GM12878 (cell line): ENCODE measurements at regions of chr7 and their contacts with region 1.

Region 1: DNA sequence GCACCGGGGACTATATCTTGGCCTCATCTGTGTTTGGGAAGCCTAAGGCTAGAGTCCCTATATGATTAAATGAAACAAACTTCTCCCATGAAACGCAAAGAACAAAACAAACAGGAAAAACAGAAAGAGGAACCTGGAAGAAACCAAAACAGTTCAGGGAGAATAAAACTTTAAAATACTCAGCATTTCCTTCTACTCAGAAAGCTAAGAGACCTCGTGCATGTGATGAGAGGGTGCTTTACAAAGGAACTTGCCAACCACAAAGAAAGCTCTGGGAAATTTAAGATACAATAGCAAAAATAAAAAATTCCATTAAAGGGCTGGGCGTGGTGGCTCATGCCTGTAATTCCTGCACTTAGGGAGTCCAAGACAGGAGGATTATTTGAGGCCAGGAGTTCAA is 6.9 kb downstream of the PILRA start:
- DNase-seq: no peak
- ATAC-seq: no peak
- H3K4me3 ChIP-seq: no peak overlapping the region; the same call in 1 of the 2 replicates
- H3K27ac ChIP-seq: no peak overlapping the region
- H3K4me1 ChIP-seq: peaks cover 8% of the 10 kb centered on the region
- H3K27me3 ChIP-seq: no peaks in the 10 kb centered on the region
- CTCF ChIP-seq: no peak
- EP300 ChIP-seq: no peak
- POLR2A ChIP-seq: no peak
- RAD21 ChIP-seq: no peak

Region 2: DNA sequence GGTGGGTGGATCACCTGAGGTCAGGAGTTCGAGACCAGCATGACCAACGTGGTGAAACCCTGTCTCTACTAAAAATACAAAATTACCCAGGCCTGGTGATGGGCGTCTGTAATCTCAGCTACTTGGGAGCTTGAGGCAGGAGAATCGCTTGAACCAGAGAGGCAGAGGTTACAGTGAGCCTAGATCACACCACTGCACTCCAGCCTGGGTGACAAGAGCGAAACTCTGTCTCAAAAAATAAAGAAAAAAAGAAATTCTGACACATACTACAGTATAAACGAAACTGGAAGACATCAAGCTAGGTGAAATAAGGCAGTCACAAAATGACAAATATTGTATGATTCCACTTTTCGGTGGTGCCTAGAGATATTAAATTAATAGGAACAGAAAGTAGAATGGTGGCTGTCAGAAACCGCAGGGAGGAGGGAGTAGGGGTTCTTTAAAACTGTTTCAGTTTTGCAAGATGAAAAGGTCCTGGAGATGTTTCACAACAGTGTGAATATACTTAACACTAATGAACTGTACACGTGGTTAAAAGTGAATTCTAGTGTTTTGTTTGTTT is 16.3 kb after region 1 on chr7:
- CTCF ChIA-PET with region 1: interaction called, 8 read pairs
- POLR2A ChIA-PET with region 1: interaction called, 33 read pairs
- RAD21 ChIA-PET with region 1: interaction called, 27 read pairs
- SMC1A ChIA-PET with region 1: interaction called, 27 read pairs
- in situ Hi-C with region 1: no loop called
- intact Hi-C with region 1: loop called (anchors 2 kb)
- DNase-seq: peak; percentile 93
- ATAC-seq: peak; percentile 92
- H3K4me3 ChIP-seq: peak overlapping the region; percentile 43; the same call in 1 of the 2 replicates
- H3K27ac ChIP-seq: peak overlapping the region; percentile 72
- H3K4me1 ChIP-seq: peaks cover 33% of the 10 kb centered on the region
- H3K27me3 ChIP-seq: no peaks in the 10 kb centered on the region
- CTCF ChIP-seq: no peak
- EP300 ChIP-seq: peak; percentile 63 to 92; a peak in 2 of 4 replicates
- POLR2A ChIP-seq: no peak
- RAD21 ChIP-seq: no peak